Endothelial cell of umbilical vein (primary cell): ENCODE measurements at regions of chr20 and their contacts with region 1.

Region 1: DNA sequence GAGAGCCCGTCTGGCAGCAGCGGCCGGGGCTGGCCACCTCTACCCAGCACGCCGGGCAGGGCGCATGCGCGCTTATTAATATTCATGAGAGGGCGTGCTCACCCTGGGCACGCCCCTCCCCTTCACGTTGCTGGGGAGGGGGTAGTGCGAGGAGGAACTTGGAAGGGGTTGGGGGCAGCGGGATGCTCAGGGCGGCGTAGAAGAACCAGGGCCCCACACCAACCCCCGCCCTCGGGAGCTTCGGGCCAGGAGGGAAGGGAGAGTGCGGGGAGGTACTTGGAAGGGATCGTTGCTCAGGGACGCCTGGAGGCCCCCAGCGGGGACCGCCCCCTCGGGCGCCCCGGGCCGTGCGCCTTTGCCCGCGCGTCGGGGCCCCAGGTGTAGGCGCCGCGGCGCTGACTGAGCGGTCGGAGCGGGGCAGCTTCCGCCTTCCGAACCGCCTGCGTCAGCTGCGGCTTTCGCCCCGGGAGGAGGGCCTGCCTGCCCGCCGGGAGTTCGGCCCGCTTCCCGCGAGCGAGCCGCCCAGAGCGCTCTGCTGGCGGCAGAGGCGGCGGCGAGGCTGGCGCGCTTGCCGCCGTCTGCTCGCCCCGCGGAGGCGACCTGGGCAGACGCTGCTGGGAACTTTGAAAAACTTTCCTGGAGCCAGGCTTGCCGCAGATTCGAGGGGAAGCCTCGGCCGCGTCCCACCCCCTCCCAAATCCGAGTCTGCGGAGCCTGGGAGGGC is at the start of gene JAG1:
- DNase-seq: peak; percentile 94
- H3K4me3 ChIP-seq: peak within 1 kb of the TSS; percentile 91 to 95 (median 94)
- H3K27ac ChIP-seq: peak within 1 kb of the TSS; percentile 92
- H3K4me1 ChIP-seq: peaks cover 31% of the 10 kb centered on the region
- H3K27me3 ChIP-seq: no peaks in the 10 kb centered on the region
- CTCF ChIP-seq: no peak
- POLR2A ChIP-seq: peak; percentile 47
- total RNA-seq, gene JAG1: 31.7 and 37.0 TPM in 2 replicates

Region 2: DNA sequence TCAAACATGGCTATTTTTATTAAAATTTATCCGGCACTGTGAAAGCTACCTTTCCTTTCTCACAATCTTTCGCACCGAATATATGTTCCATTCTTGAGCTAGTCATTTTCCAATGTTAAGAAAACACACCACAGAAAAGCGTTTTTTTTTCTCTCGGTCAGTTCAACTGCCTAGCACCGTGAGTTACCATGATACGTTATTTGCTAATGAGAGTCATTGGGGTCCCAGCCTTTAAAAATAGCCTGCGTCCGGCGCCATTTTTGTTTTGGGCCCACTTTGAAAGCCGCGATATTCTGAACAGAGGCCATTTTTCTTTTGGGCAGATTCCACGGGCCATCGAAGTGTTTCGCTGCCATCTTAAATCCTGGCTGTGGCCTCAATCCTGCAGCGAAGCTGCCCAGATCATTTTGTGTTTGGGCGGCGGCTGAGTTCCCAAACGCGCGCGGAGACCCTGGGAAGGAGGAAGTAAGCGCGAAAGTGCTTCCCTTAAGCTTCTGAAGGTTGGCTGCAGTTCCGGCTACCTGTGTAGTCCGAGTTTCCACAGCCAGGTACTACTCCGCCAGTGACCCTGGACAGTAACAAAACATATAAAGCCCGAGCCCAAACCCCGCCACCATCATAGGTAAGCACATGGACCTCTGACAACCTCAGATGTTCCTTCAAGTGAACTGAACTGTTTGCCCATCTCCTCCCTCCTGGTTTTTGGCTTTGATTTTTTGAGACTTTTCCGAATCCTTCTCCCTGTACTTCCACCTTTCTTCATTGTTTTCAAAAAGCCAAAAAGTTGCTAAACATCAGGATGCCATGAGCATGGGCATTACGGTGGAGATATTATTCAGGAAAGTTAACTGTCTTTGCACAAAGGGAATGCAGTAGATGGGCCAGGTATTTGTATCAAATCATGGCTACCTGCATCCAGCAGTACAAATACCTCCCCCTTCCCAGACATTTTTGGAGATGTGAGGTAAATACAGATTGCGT is 239.0 kb before region 1 on chr20 and contains the start of gene SLX4IP:
- CTCF ChIA-PET with region 1: no interaction called
- POLR2A ChIA-PET with region 1: interaction called, 3 read pairs
- dilution Hi-C with region 1: no loop called
- intact Hi-C with region 1: loop called (anchors 2 kb)
- DNase-seq: peak; percentile 95
- H3K4me3 ChIP-seq: peak within 1 kb of the TSS; percentile 96 to 99 (median 97)
- H3K27ac ChIP-seq: peak within 1 kb of the TSS; percentile 97
- H3K4me1 ChIP-seq: peaks cover 15% of the 10 kb centered on the region
- H3K27me3 ChIP-seq: no peaks in the 10 kb centered on the region
- CTCF ChIP-seq: no peak
- POLR2A ChIP-seq: peak; percentile 63
- total RNA-seq, gene SLX4IP: 4.1 and 4.5 TPM in 2 replicates

Region 3: GRCh38 chr20:10761232-10761631 is 87.1 kb after region 1 on chr20:
- CTCF ChIA-PET with region 1: interaction called, 4 read pairs
- POLR2A ChIA-PET with region 1: no interaction called
- dilution Hi-C with region 1: no loop called
- intact Hi-C with region 1: loop called (anchors 1 kb)
- DNase-seq: peak; percentile 93
- H3K4me3 ChIP-seq: no peak overlapping the region
- H3K27ac ChIP-seq: peak overlapping the region; percentile 78
- H3K4me1 ChIP-seq: peaks cover 41% of the 10 kb centered on the region
- H3K27me3 ChIP-seq: no peaks in the 10 kb centered on the region
- CTCF ChIP-seq: no peak
- POLR2A ChIP-seq: peak; percentile 36

Region 4: DNA sequence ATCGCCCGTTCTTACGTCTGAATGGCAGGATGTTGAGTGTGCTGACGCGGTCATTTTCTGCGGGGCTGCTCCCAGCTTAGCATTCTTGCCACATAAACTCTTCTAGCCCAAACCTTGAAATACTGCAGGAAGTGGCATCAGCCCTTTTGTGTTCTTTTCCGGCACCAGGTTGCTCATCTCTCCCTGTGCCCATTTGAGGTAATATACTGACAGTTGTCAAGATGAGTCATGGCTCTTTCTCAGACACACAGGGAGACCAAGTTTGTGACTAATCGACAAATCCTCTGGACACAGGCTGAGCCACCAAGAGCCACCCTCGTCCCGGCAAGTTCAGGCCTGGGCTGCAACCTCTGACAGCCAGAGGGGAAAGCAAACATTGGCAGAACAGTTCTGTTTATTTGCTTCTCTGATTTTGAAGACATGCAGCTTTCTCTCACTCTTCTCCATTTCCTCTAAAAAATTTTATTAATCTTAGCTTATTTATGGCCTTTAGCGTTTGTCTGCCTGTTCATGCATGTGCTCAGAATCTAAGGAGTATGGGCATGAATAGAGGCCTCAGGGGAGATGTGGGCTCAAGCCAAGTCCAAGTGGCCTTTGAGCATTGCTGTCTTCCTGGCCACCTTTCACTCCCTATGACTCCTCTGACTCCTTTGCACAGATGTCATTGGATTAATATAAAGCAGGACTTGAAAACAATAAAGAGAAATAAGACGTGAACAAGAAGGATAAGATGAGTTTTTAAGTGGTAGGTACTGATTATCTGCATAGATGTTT is 327.8 kb after region 1 on chr20:
- CTCF ChIA-PET with region 1: interaction called, 7 read pairs
- POLR2A ChIA-PET with region 1: no interaction called
- dilution Hi-C with region 1: no loop called
- intact Hi-C with region 1: loop called (anchors 2 kb)
- DNase-seq: peak; percentile 71
- H3K4me3 ChIP-seq: no peak overlapping the region
- H3K27ac ChIP-seq: peak overlapping the region; percentile 50
- H3K4me1 ChIP-seq: peaks cover 29% of the 10 kb centered on the region
- H3K27me3 ChIP-seq: no peaks in the 10 kb centered on the region
- CTCF ChIP-seq: no peak
- POLR2A ChIP-seq: no peak

Region 5: DNA sequence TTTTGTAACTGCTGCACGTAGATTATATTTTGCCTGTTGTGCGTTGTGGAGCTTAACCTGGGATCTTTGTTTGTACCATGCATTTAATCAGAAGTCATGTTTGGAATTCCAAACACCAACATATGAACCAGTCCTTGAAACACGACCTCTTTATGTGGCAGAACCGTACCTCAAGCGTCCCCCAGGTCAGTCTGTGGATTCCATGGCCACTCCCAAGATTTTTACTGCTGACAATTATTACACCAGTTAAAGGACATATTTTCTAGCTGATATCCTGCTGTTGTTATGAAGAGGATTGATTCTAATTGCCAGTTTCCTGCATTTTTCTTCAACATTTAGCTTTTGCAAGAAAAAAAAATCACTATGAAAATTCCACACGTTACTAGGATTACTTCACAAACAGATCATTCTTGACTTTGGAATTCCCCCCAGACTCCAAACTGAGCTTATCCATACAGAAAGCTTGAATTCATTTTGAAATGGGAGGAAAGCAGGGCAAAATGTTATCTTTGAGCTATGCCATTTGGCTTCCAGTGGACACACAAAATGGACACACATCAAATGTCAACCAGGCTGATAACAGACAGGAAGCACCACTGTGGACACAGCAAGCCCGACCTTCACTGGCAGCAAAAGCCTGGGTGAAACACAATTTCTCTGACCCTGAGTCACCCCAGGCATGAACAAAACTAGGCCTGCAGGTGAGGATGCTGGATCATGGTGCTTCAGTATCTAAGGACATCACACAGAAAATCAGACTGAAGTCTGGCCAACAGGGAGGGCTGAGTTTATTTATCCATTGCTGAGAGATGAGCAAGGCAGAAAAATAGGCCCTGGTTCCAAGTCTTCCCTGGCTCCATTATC is 542.5 kb after region 1 on chr20:
- CTCF ChIA-PET with region 1: interaction called, 11 read pairs
- POLR2A ChIA-PET with region 1: interaction called, 3 read pairs
- dilution Hi-C with region 1: no loop called
- intact Hi-C with region 1: no loop called
- DNase-seq: peak; percentile 88
- H3K4me3 ChIP-seq: no peak overlapping the region
- H3K27ac ChIP-seq: peak overlapping the region; percentile 74
- H3K4me1 ChIP-seq: peaks cover 33% of the 10 kb centered on the region
- H3K27me3 ChIP-seq: no peaks in the 10 kb centered on the region
- CTCF ChIP-seq: no peak
- POLR2A ChIP-seq: no peak

Region 6: DNA sequence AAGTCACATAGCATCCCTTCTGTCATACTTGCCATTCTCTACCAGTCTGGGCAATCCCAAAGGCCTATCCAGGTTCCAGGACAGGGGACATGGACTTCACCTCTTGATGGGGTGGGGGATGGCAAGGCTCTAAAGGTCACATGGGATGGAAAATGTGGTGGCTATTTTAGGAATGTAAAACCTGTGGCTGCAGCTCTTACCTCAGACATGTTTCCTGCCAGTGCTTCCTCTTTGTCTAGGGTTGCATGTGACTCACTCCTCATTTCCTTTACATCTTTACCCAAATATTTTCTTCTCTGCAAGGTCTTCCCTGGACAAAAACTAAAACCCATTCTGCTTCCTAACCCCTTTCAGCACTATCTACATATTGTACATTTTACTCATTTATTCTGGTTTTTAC is 1379.2 kb after region 1 on chr20:
- CTCF ChIA-PET with region 1: no interaction called
- POLR2A ChIA-PET with region 1: no interaction called
- dilution Hi-C with region 1: no loop called
- intact Hi-C with region 1: loop called (anchors 5 kb)
- DNase-seq: peak; percentile 90
- H3K4me3 ChIP-seq: no peak overlapping the region
- H3K27ac ChIP-seq: peak overlapping the region; percentile 90
- H3K4me1 ChIP-seq: peaks cover 34% of the 10 kb centered on the region
- H3K27me3 ChIP-seq: no peaks in the 10 kb centered on the region
- CTCF ChIP-seq: no peak
- POLR2A ChIP-seq: no peak